CD4-positive, alpha-beta T cell (primary cell): ENCODE measurements at regions of chr15 and their contacts with region 1.

Region 1: DNA sequence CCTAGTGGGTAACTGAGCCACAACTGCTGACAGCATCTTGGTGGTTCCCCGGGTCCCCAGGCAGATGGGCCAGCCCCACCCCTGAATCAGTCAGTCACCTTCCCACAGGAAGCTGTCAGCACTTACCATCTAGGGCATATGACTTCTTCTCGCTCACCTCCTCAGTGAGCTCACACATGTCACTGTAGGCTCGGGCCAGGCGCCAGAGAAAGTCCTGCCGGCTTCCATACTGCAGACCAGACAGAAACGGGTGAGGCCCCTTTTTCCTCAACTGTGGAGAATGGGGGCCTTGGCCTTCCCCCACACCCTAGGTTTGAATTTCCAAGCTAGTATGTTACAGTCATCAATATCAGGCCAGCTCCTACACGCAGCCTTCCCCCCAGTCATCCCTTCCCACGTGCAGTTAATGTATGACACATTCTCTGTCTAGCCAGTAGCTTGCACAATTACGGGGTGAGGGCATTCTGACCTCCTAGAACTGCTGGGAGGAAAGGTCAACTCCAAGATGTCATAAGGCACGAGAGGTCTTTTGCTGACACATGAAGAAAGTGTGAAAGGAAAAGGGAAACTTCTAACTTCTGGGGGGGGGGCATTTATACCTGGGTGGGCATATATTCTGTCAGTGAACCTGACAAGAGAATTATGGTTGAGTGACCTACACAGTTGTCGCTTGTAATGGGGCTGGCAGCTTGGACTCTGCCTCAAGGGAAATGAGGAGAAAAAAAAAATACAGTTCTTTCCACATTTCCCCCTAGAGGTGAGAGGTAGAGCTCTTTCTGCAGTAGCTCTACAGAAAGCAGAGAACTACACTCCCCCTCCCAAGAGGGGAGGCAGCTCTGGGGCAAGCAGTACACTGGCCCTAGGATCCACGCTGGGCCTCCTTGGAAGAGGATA is 10.9 kb downstream of the RMDN3 start:
- DNase-seq: peak; percentile 25 to 91 (median 44)
- ATAC-seq: peak; percentile 91
- H3K4me3 ChIP-seq: no peak overlapping the region
- H3K4me3 Mint-ChIP-seq: peak overlapping the region; percentile 20
- H3K27ac ChIP-seq: peak overlapping the region; percentile 52 to 81
- H3K27ac Mint-ChIP-seq: peak overlapping the region; percentile 96
- H3K4me1 ChIP-seq: peaks cover 22% of the 10 kb centered on the region
- H3K4me1 Mint-ChIP-seq: peaks cover 10% of the 10 kb centered on the region
- H3K27me3 ChIP-seq: no peaks in the 10 kb centered on the region
- H3K27me3 Mint-ChIP-seq: no peaks in the 10 kb centered on the region
- CTCF ChIP-seq: no peak

Region 2: DNA sequence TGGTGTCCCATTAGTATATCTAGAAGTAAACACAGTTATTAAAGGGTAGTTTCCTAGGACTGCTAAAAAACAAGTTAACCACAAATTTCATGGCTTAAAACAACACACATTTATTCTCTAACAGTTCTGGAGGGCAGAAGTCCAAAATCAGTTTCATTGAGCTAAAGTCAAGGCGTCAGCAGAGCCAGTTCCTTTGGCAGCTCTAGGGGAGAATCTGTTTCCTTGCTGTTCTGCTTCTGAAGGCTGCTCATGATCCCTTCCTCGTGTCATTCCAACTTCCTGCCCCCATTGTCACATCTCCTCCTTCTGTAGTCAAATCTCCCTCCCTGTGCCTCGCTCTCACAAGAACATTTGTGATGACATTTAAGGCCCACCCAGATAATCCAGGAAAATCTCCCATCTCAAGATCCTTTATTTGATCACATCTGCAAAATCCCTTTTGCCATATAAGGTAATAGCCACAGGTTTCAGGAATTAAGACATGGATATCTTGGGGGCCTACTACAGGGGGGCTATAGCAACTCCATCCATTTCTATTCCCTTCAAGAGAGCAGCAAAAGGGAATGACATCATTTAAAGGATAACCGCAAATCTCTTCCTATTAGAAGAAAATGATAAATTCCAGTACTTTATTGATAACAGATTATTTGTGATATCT is 874.2 kb before region 1 on chr15:
- CTCF ChIA-PET with region 1: no interaction called
- POLR2A ChIA-PET with region 1: no interaction called
- intact Hi-C with region 1: no loop called
- DNase-seq: no peak
- ATAC-seq: no peak
- H3K4me3 ChIP-seq: no peak overlapping the region
- H3K4me3 Mint-ChIP-seq: no peak overlapping the region
- H3K27ac ChIP-seq: no peak overlapping the region
- H3K27ac Mint-ChIP-seq: no peak overlapping the region
- H3K4me1 ChIP-seq: no peaks in the 10 kb centered on the region
- H3K4me1 Mint-ChIP-seq: no peaks in the 10 kb centered on the region
- H3K27me3 ChIP-seq: no peaks in the 10 kb centered on the region
- H3K27me3 Mint-ChIP-seq: peaks cover 7% of the 10 kb centered on the region
- CTCF ChIP-seq: no peak

Region 3: GRCh38 chr15:40763801-40764732 is 19.9 kb after region 1 on chr15 and contains the start of gene GCHFR:
- CTCF ChIA-PET with region 1: interaction called, 8 read pairs
- POLR2A ChIA-PET with region 1: interaction called, 10 read pairs
- intact Hi-C with region 1: no loop called
- DNase-seq: peak; percentile 35 to 87 (median 63)
- ATAC-seq: peak; percentile 48
- H3K4me3 ChIP-seq: peak within 1 kb of the TSS; percentile 98
- H3K4me3 Mint-ChIP-seq: peak within 1 kb of the TSS; percentile 89
- H3K27ac ChIP-seq: peak within 1 kb of the TSS; percentile 60 to 71
- H3K27ac Mint-ChIP-seq: peak within 1 kb of the TSS; percentile 90
- H3K4me1 ChIP-seq: peaks cover 40% of the 10 kb centered on the region
- H3K4me1 Mint-ChIP-seq: peaks cover 30% of the 10 kb centered on the region
- H3K27me3 ChIP-seq: no peaks in the 10 kb centered on the region
- H3K27me3 Mint-ChIP-seq: no peaks in the 10 kb centered on the region
- CTCF ChIP-seq: peak; percentile 45
- total RNA-seq, gene GCHFR: 13.5 to 14.8 TPM